ENCODE measurements at regions of chr7 and their contacts with region 1.

Region 1: GRCh38 chr7:36291387-36292316 is 98.0 kb upstream of the ANLN start:
- DNase-seq: peak; percentile 46
- H3K4me3 Mint-ChIP-seq: peak overlapping the region; percentile 31
- H3K27ac Mint-ChIP-seq: no peak overlapping the region
- H3K4me1 Mint-ChIP-seq: peaks cover 41% of the 10 kb centered on the region
- H3K27me3 Mint-ChIP-seq: no peaks in the 10 kb centered on the region

Region 2: GRCh38 chr7:35985126-35985754 is 306.4 kb before region 1 on chr7:
- intact Hi-C with region 1: loop called (anchors 1 kb)
- DNase-seq: peak; percentile 54
- H3K4me3 Mint-ChIP-seq: no peak overlapping the region
- H3K27ac Mint-ChIP-seq: no peak overlapping the region
- H3K4me1 Mint-ChIP-seq: no peaks in the 10 kb centered on the region
- H3K27me3 Mint-ChIP-seq: peaks cover 3% of the 10 kb centered on the region

Region 3: DNA sequence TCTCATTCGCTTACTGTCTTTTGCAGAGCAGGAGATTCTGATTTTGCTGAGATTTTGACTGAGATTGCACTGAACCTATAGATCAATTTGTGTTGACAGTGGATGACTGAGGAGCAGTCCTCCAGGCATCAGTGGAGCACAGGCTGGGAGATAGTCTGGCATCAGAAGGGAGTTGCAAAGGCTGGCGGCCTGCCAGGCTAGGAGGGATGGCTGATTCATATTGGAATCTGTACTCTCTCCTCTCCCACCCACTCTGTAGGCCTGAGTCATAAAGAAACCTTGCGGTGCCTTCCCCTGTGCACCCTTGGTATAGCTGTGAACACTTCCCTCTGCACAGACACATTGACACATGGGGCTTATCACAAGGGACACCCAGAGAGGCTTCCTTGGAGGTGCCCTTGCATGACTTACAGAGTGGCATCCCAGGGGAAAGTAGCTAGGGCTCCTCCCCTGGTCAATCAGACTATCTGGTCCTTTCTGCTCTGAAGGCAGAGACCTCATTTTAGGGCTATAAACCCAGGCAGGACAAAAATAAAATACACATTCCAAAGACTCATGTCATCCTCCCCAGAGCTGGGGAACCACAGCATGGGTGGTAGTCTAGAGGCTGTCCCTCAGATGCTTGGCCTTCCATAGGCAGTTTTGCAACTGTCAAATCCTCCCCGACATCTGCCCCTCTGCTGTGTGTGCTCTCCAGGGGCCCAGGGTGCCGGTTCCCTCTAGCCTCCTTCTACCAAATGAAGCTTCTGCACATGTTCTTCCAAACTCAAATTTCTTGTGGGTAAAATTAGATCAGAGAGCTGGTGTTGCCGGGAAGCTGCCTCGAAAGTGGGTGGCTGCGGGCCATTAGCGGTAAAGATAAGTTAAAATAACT is 176.0 kb before region 1 on chr7:
- intact Hi-C with region 1: loop called (anchors 5 kb)
- DNase-seq: peak; percentile 60
- H3K4me3 Mint-ChIP-seq: peak overlapping the region; percentile 32
- H3K27ac Mint-ChIP-seq: peak overlapping the region; percentile 61
- H3K4me1 Mint-ChIP-seq: peaks cover 33% of the 10 kb centered on the region
- H3K27me3 Mint-ChIP-seq: peaks cover 26% of the 10 kb centered on the region

Region 4: DNA sequence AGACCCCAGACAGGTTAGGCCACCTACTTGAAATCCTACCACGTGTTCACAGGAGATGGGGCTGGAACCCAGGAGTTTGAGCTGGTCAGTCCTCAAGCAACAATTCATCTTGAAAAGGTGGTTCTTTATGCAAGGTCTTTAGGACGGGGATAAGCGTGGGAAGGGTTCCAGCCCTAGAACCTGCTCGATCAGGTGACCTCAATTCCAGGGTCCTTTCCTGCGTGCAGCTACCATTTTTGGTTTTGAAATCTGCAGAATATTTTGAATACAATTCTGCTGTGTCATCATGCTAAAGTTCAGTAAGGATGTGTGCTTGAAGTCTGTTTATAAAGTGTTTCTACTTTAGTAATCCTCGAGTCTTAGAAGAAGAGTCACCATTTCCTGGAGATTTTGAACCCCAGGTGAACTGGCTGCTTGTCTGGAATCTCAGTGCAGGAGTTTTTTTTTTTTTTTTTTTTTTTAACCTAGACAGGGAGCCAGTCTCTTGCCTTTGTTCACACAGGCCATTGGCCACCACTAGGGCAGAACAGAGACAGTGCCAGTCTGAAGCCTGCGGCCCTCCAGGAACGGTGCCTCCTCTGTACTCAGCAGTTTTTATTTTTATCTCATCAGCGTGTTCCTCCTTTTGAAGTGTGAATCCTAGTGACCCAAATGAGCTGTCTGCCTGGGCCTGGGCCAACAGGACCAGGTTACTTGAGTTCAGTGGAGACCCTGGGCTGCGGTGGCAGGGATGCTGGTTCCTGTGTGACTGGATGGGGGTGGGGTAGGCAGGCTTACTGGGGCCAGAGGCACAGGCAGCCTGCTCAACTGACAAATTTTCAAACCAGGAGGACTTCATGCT is 84.0 kb before region 1 on chr7:
- intact Hi-C with region 1: loop called (anchors 5 kb)
- DNase-seq: no peak
- H3K4me3 Mint-ChIP-seq: no peak overlapping the region
- H3K27ac Mint-ChIP-seq: peak overlapping the region; percentile 7
- H3K4me1 Mint-ChIP-seq: peaks cover 19% of the 10 kb centered on the region
- H3K27me3 Mint-ChIP-seq: peaks cover 5% of the 10 kb centered on the region

Region 5: DNA sequence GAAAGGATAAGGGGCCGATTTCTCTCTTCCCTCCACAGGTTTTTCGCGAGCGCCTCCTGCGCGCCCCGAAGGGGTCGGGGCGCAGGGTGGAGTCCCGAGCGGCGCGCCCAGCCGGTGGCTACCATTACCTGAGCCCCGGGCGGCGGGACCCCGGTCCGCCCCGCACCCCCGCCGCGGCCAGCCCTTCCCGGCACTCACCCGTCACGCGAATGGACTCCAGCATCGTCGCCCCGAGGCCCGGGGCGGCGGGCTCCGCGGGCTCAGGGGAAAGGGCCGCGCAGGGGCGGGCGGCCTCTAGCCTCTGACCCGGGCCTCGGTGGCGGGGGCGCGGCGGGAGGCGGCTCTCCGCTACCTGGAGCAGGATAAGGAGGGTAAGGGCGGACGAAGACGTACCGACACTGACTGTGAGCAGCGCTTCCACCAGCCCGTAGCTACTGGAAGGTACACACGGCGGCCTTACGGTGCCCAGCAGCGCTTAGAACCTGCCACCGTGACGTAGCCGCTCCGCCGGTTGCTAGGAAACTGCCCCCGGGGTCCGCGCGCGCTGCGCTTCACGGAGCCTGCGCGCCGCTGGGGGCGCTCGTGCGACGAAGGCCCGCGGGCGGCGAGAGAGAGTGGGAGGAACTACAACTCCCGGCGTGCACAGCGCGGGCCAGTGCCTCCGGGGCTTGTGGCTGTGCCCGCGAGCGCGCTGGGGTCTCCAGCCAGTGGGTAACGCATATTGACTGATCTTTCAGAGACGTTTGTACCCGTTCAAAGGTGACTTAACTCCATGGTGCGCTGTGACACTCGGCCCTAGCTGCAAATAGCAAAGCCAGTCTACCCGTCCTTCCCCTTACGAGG is 75.3 kb after region 1 on chr7:
- intact Hi-C with region 1: loop called (anchors 2 kb)
- DNase-seq: peak; percentile 91
- H3K4me3 Mint-ChIP-seq: peak overlapping the region; percentile 91
- H3K27ac Mint-ChIP-seq: peak overlapping the region; percentile 67
- H3K4me1 Mint-ChIP-seq: no peaks in the 10 kb centered on the region
- H3K27me3 Mint-ChIP-seq: peaks cover 31% of the 10 kb centered on the region